ENCODE measurements at regions of chr1 and their contacts with region 1.

Region 1: DNA sequence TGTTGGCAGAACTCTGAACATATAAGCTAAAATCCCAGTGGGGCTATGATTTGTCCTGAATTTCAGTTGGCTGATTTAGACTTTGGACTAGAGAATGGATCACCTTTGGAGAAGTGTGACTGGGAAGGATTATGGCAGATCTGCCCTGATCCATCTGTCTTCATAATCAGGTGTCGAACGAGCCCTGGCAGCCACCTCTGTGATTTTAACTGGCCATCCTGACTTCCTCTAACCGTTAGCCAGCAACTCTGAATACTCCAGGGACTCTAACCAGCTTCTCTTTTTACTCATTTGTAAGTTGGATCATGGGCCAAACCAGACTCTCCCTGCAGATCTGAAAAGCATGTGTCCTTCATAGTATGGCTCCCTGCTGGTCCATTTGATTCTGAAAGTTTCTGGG is 32.0 kb downstream of the ACTN2 start:
- DNase-seq: no peak
- H3K4me3 ChIP-seq: no peak overlapping the region
- H3K27ac ChIP-seq: no peak overlapping the region
- H3K4me1 ChIP-seq: peaks cover 23% of the 10 kb centered on the region
- H3K27me3 ChIP-seq: no peaks in the 10 kb centered on the region
- CTCF ChIP-seq: no peak

Region 2: DNA sequence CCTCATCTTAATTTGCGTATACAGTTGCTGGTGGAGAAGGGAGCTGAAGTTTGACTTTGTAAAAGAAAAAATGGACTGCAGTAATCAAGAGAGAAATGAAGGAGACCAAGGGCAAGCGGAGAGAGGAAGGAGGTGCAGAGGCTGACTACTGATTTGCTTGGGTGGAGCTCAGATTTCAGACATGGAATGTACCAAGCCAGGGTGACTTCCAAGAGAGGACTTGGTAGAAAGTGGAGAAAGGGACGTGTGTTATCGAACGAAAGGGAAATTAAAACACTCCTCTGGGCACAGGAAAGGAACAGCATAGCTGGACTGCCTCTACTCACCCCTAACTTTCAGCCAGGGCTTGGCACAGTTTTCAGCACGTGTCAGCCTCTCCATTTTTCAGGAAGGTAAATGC is 98.9 kb before region 1 on chr1:
- CTCF ChIA-PET with region 1: no interaction called
- POLR2A ChIA-PET with region 1: interaction called, 14 read pairs
- intact Hi-C with region 1: no loop called
- DNase-seq: no peak
- H3K4me3 ChIP-seq: no peak overlapping the region
- H3K27ac ChIP-seq: no peak overlapping the region
- H3K4me1 ChIP-seq: no peaks in the 10 kb centered on the region
- H3K27me3 ChIP-seq: no peaks in the 10 kb centered on the region
- CTCF ChIP-seq: no peak

Measured in A673 (cell line).